ENCODE measurements at regions of chr11 and their contacts with region 1.

Region 1: GRCh38 chr11:59542142-59542810 is 30.9 kb downstream of the OR4D9 start:
- DNase-seq: no peak
- H3K4me3 ChIP-seq: no peak overlapping the region
- H3K27ac ChIP-seq: no peak overlapping the region
- H3K4me1 ChIP-seq: no peaks in the 10 kb centered on the region
- H3K27me3 ChIP-seq: no peaks in the 10 kb centered on the region
- CTCF ChIP-seq: no peak

Region 2: DNA sequence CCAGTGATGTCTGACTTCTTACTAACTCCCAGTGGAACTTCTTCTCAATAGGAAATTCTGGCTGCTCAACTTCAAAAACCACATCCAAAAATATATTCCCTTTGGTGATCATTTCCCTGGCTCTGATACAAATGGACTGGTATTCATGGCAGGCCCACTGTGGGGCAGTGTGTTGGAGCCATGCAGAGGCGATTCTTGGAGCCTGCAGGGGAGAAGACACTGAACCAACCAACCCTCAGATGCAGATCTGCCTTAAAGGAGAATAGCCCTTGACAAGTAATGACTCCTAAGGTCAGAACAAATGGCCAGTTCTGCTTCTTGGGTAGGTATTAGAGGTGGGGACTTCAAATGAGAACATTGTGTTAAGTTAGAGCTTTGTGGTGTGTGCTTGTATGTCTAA is 18.7 kb before region 1 on chr11:
- CTCF ChIA-PET with region 1: interaction called, 11 read pairs
- POLR2A ChIA-PET with region 1: no interaction called
- intact Hi-C with region 1: no loop called
- DNase-seq: no peak
- H3K4me3 ChIP-seq: no peak overlapping the region
- H3K27ac ChIP-seq: no peak overlapping the region
- H3K4me1 ChIP-seq: no peaks in the 10 kb centered on the region
- H3K27me3 ChIP-seq: no peaks in the 10 kb centered on the region
- CTCF ChIP-seq: peak; percentile 26; the same call in 1 of the 2 replicates

Region 3: DNA sequence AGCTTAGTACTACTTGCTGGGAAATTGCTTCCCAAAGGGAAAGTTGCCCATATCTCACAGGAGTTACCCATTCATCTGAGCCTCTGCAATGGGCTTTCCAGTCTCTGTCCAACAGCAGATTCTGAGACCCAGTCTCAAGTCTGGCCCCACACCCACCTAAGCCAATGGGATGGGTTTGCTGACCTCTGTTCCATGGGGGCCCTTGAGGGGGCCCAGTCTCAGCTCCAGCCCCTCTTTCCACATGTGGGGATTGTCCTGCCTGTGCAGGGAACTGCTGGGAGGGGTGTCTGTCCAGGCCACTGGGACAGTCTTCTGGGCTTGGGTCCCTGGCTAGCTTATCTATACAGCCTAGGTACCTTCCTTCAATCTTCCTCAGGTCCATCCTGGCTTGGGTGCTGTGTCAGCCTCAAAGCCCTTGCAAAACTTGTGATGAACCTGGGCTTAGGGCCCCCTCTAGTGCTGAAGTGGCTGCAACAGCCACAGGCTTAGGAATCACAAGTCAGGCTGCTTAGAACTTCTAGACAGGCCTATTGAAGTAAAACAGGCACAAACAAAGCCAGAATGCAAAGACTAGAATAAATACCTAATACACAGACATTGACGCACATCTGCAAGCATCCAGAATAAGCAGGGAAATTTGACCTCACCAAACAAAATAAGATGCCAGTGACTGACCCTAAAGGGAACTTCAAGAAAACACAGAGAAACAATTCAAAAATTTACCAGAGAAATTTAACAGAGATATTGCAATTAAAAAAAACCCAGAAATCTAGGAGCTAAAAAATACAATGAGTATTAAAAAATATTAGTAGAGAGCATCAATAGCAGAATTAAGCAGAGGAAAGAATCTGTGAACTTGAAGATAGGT is 138.2 kb after region 1 on chr11:
- CTCF ChIA-PET with region 1: interaction called, 7 read pairs
- POLR2A ChIA-PET with region 1: no interaction called
- intact Hi-C with region 1: loop called (anchors 1 kb)
- DNase-seq: peak; percentile 90
- H3K4me3 ChIP-seq: no peak overlapping the region
- H3K27ac ChIP-seq: no peak overlapping the region
- H3K4me1 ChIP-seq: peaks cover 13% of the 10 kb centered on the region
- H3K27me3 ChIP-seq: no peaks in the 10 kb centered on the region
- CTCF ChIP-seq: peak; percentile 98

Region 4: GRCh38 chr11:59802639-59803176 is 260.4 kb after region 1 on chr11:
- CTCF ChIA-PET with region 1: no interaction called
- POLR2A ChIA-PET with region 1: no interaction called
- intact Hi-C with region 1: loop called (anchors 2 kb)
- DNase-seq: peak; percentile 70
- H3K4me3 ChIP-seq: no peak overlapping the region
- H3K27ac ChIP-seq: no peak overlapping the region
- H3K4me1 ChIP-seq: no peaks in the 10 kb centered on the region
- H3K27me3 ChIP-seq: no peaks in the 10 kb centered on the region
- CTCF ChIP-seq: peak; percentile 82

Region 5: GRCh38 chr11:59818572-59818971 is 276.3 kb after region 1 on chr11:
- CTCF ChIA-PET with region 1: no interaction called
- POLR2A ChIA-PET with region 1: no interaction called
- intact Hi-C with region 1: no loop called
- DNase-seq: no peak
- H3K4me3 ChIP-seq: no peak overlapping the region
- H3K27ac ChIP-seq: no peak overlapping the region
- H3K4me1 ChIP-seq: no peaks in the 10 kb centered on the region
- H3K27me3 ChIP-seq: no peaks in the 10 kb centered on the region
- CTCF ChIP-seq: no peak

Region 6: DNA sequence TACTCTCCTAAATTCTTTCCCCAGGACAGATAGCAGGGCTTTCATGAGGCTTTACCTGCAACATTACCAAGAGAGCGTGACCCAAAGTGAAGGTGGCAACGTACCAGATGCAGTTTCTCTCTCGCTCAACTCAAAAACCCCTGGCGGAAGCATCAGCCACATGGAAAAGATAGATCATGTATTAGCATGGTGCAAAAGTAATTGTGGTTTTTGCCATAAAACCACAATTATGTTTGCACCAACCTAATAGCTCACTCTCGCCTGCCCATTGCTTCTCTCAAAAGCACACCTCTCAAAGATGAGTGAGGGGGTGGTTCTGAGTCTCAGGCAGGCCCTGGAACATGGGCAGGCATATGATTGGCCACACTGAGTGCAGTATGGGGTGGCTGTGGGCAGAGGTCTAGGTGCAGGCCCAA is 633.6 kb after region 1 on chr11:
- CTCF ChIA-PET with region 1: no interaction called
- POLR2A ChIA-PET with region 1: no interaction called
- intact Hi-C with region 1: no loop called
- DNase-seq: no peak
- H3K4me3 ChIP-seq: no peak overlapping the region
- H3K27ac ChIP-seq: no peak overlapping the region
- H3K4me1 ChIP-seq: no peaks in the 10 kb centered on the region
- H3K27me3 ChIP-seq: peaks cover 47% of the 10 kb centered on the region
- CTCF ChIP-seq: no peak